ENCODE measurements at regions of chr1 and their contacts with region 1.

Region 1: GRCh38 chr1:31548907-31549808 is 27.2 kb upstream of the TINAGL1 start:
- DNase-seq: peak; percentile 92
- H3K4me3 ChIP-seq: peak overlapping the region; percentile 34
- H3K27ac ChIP-seq: no peak overlapping the region
- H3K4me1 ChIP-seq: peaks cover 12% of the 10 kb centered on the region
- H3K27me3 ChIP-seq: no peaks in the 10 kb centered on the region
- CTCF ChIP-seq: peak; percentile 94

Region 2: GRCh38 chr1:31182352-31182751 is 366.8 kb before region 1 on chr1:
- CTCF ChIA-PET with region 1: interaction called, 7 read pairs
- POLR2A ChIA-PET with region 1: no interaction called
- intact Hi-C with region 1: loop called (anchors 5 kb)
- DNase-seq: peak; percentile 87
- H3K4me3 ChIP-seq: no peak overlapping the region
- H3K27ac ChIP-seq: no peak overlapping the region
- H3K4me1 ChIP-seq: peaks cover 9% of the 10 kb centered on the region
- H3K27me3 ChIP-seq: peaks cover 4% of the 10 kb centered on the region
- CTCF ChIP-seq: no peak; the same call in 1 of the 2 replicates

Region 3: GRCh38 chr1:31394628-31395193 is 154.4 kb before region 1 on chr1:
- CTCF ChIA-PET with region 1: interaction called, 24 read pairs
- POLR2A ChIA-PET with region 1: no interaction called
- intact Hi-C with region 1: loop called (anchors 2 kb)
- DNase-seq: peak; percentile 87
- H3K4me3 ChIP-seq: peak overlapping the region; percentile 38
- H3K27ac ChIP-seq: no peak overlapping the region
- H3K4me1 ChIP-seq: peaks cover 3% of the 10 kb centered on the region
- H3K27me3 ChIP-seq: no peaks in the 10 kb centered on the region
- CTCF ChIP-seq: peak; percentile 89

Region 4: DNA sequence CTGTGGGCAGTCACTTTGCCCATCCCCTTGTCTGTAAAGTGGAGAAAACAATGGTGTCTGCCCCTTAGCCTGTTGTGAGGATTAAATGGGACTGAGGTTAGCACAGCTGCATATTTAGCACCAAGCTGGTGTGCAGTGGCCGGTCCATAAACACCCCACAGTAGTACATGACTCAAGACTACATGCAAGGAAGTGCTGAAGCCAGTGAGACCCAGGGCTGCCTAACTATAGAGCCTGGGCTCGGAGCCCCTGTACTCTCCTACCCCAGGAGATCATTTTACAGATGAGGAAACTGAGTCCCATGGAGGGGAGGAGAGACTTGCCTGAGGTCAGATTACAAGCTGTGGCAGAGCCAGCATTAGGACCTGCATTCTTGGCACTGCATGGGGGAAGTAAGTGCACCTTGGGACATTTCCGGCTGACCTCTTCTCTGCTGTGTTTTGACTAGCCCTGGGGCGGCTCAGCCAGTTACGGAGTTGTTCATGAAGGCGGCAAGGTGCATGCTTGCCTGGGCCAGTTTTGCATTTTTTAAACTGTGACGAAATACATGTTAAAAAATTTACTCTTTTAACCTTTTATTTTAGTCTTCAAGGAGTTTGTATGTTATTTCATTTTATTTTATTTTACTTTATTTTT is 132.9 kb before region 1 on chr1:
- CTCF ChIA-PET with region 1: interaction called, 3 read pairs
- POLR2A ChIA-PET with region 1: no interaction called
- intact Hi-C with region 1: loop called (anchors 5 kb)
- DNase-seq: no peak
- H3K4me3 ChIP-seq: no peak overlapping the region
- H3K27ac ChIP-seq: no peak overlapping the region
- H3K4me1 ChIP-seq: peaks cover 8% of the 10 kb centered on the region
- H3K27me3 ChIP-seq: peaks cover 40% of the 10 kb centered on the region
- CTCF ChIP-seq: no peak

Region 5: DNA sequence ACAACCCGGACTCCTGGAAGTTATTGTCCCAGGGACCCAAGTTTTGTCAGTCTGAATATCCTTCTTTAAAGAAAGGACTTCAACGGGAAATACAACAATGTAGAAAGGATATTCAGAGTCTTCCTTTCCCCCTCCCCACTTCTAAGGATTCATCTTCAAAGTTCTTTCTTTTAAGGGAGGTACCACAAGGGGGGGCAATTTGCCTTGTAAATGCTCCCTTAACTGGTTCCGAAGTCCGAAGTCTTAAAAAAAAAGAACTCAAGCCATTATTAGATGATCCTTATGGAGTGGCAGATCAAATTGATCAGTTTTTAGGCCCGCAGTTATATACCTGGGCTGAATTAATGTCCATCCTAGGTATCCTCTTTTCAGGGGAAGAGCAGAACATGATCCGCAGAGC is 89.1 kb before region 1 on chr1:
- CTCF ChIA-PET with region 1: no interaction called
- POLR2A ChIA-PET with region 1: no interaction called
- intact Hi-C with region 1: loop called (anchors 5 kb)
- DNase-seq: peak; percentile 11
- H3K4me3 ChIP-seq: no peak overlapping the region
- H3K27ac ChIP-seq: no peak overlapping the region
- H3K4me1 ChIP-seq: no peaks in the 10 kb centered on the region
- H3K27me3 ChIP-seq: peaks cover 11% of the 10 kb centered on the region
- CTCF ChIP-seq: peak; percentile 38

Region 6: DNA sequence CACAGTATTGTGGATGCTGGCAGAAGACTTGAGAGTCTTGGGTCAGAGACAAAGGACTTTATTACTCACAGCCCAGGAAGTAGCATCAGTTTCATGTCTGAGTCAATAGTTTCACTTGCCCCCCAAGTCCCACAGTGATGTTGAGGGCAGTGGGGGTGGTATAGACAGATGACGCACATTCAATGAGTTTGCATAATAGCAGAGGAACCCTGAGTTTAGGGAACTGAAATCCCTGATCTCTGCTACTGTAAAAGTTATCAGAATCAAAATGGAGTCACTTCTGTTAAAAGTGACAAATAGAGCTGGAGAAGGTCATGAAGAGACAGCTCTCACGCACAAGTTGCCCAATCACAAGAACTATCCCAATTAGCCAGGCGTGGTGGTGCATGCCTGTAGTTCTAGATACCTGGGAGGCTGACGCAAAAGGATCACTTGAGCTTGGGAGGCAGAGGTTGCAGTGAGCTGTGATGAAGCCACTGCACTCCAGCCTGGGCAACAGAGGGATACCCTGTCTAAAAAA is 56.8 kb after region 1 on chr1:
- CTCF ChIA-PET with region 1: no interaction called
- POLR2A ChIA-PET with region 1: no interaction called
- intact Hi-C with region 1: no loop called
- DNase-seq: no peak
- H3K4me3 ChIP-seq: no peak overlapping the region
- H3K27ac ChIP-seq: no peak overlapping the region
- H3K4me1 ChIP-seq: peaks cover 19% of the 10 kb centered on the region
- H3K27me3 ChIP-seq: no peaks in the 10 kb centered on the region
- CTCF ChIP-seq: no peak

Measured in A673 (cell line).